ENCODE measurements at regions of chr3 and their contacts with region 1.

Region 1: DNA sequence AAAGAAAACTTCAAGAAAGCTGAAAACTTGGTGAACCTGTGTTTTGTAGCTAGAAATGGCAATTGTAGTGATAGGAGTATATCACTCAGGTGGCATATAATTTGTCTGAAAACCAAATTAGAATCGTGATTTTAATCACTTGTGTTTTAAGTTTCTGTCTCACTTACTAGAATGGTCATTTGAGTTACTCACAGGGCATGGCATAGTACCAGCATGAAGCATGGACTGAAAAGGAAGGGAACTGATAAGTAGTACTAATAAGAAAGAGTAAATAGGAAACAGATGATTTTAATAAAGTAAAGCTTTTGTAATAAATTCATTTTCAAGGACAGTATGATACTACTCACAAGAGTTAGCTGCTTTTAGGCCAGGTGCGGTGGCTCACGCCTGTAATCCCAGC is 22.1 kb downstream of the OSBPL11 start:
- DNase-seq: no peak
- ATAC-seq: no peak
- H3K4me3 ChIP-seq: no peak overlapping the region
- H3K27ac ChIP-seq: no peak overlapping the region
- H3K4me1 ChIP-seq: no peaks in the 10 kb centered on the region
- H3K27me3 ChIP-seq: no peaks in the 10 kb centered on the region
- CTCF ChIP-seq: no peak

Region 2: GRCh38 chr3:125313060-125313635 is 260.1 kb before region 1 on chr3:
- intact Hi-C with region 1: no loop called
- DNase-seq: no peak
- ATAC-seq: no peak
- H3K4me3 ChIP-seq: no peak overlapping the region
- H3K27ac ChIP-seq: no peak overlapping the region
- H3K4me1 ChIP-seq: peaks cover 0 to 37% (median 0%) of the 10 kb centered on the region in 9 donors
- H3K27me3 ChIP-seq: no peaks in the 10 kb centered on the region
- CTCF ChIP-seq: no peak

Region 3: GRCh38 chr3:125480656-125481374 is 92.4 kb before region 1 on chr3:
- intact Hi-C with region 1: loop called in 1 of 10 experiments (anchors 10 kb)
- DNase-seq: no peak
- ATAC-seq: no peak
- H3K4me3 ChIP-seq: no peak overlapping the region
- H3K27ac ChIP-seq: no peak overlapping the region
- H3K4me1 ChIP-seq: no peaks in the 10 kb centered on the region
- H3K27me3 ChIP-seq: no peaks in the 10 kb centered on the region
- CTCF ChIP-seq: no peak

Measured in heart right ventricle (tissue), 16 donors.